ENCODE measurements at regions of chr2 and their contacts with region 1.

Region 1: DNA sequence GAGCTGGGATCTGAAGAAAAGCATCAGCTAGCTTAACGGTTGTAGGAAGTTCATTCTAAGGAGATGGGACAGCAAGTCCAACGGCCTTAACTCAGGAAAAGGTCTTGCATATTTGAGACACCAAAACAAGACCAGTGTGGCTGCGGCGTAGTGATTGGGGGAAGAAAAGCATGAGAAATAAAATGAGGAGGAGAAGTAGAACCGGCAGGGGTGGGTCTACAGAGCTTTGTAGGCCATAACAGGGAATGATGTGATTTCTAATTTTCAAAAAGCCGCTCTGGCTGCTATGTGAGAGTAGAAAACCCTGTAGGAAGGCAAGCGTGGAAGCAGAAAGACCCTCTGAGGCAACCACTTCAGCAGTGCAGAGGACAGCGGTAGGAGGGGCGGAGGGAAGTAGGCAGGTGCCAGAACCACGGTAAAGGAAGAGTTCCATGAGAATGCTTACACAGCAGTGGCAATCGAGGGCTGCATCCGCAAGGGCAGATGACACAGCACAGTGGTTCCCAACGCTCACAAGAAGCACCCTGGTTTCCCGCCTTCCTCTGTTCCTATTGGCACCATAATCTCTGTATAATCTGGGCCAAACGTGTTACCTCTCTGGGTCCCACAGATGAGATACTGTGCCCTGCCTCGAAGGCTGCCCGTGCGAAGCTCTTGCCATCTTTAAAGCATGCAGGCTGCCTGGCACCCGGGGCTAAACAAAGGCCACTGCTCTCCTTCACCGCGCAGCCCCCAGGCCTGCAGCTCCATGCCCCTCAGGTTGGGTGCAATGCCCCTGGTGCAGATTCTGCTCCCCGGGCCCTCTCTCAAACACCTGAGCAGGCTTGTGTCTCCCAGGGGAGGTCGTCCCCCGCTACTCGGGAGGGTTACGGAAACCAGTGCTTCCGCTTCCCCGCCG is 791 bp downstream of the ANKRD39 start:
- DNase-seq: no peak
- H3K4me3 ChIP-seq: peak overlapping the region; percentile 81
- H3K27me3 ChIP-seq: no peaks in the 10 kb centered on the region
- CTCF ChIP-seq: no peak

Region 2: GRCh38 chr2:96531872-96532704 is 324.9 kb before region 1 on chr2:
- CTCF ChIA-PET with region 1: no interaction called
- POLR2A ChIA-PET with region 1: no interaction called
- DNase-seq: peak; percentile 99
- H3K4me3 ChIP-seq: 0 out of 2 replicates have a peak overlapping the region, but pooled peaks have one; percentile 10
- H3K27me3 ChIP-seq: no peaks in the 10 kb centered on the region
- CTCF ChIP-seq: no peak

Region 3: GRCh38 chr2:96832754-96833507 is 24.1 kb before region 1 on chr2:
- CTCF ChIA-PET with region 1: interaction called, 12 read pairs
- POLR2A ChIA-PET with region 1: no interaction called
- DNase-seq: no peak
- H3K4me3 ChIP-seq: no peak overlapping the region
- H3K27me3 ChIP-seq: no peaks in the 10 kb centered on the region
- CTCF ChIP-seq: no peak

Region 4: DNA sequence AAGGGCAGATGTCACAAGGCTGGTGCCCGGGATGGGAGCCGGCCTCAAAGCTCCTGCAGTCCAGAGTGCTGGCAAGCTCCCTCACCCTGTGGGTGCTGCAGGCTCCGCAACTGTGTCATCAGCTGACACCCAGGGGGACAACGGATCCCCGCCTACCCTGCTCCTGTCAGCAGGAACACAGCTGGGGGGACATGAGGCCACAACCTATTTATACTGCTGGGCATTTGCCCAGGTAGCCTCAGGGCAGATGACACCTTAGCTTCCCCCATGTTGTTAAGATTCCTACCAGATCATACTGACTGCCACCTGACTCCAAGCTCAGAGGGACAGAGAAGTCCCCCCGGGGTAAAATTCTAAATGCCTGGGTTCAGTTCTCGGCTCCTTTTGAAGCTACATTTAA is 14.4 kb before region 1 on chr2:
- CTCF ChIA-PET with region 1: interaction called, 15 read pairs
- POLR2A ChIA-PET with region 1: interaction called, 3 read pairs
- DNase-seq: no peak
- H3K4me3 ChIP-seq: no peak overlapping the region
- H3K27me3 ChIP-seq: no peaks in the 10 kb centered on the region
- CTCF ChIP-seq: no peak

Region 5: GRCh38 chr2:96868555-96869280 is 11.7 kb after region 1 on chr2:
- CTCF ChIA-PET with region 1: interaction called, 34 read pairs
- POLR2A ChIA-PET with region 1: interaction called, 5 read pairs
- DNase-seq: peak; percentile 37
- H3K4me3 ChIP-seq: peak overlapping the region; percentile 95
- H3K27me3 ChIP-seq: no peaks in the 10 kb centered on the region; the same call in 1 of the 2 replicates
- CTCF ChIP-seq: peak; percentile 47

Region 6: GRCh38 chr2:96907115-96908041 is 50.4 kb after region 1 on chr2:
- CTCF ChIA-PET with region 1: interaction called, 12 read pairs
- POLR2A ChIA-PET with region 1: no interaction called
- DNase-seq: no peak
- H3K4me3 ChIP-seq: no peak overlapping the region
- H3K27me3 ChIP-seq: no peaks in the 10 kb centered on the region; the same call in 1 of the 2 replicates
- CTCF ChIP-seq: no peak

Region 7: GRCh38 chr2:96927405-96928243 is 70.6 kb after region 1 on chr2:
- CTCF ChIA-PET with region 1: interaction called, 14 read pairs
- POLR2A ChIA-PET with region 1: no interaction called
- DNase-seq: no peak
- H3K4me3 ChIP-seq: peak overlapping the region; percentile 5; the same call in 1 of the 2 replicates
- H3K27me3 ChIP-seq: peaks cover 21% of the 10 kb centered on the region
- CTCF ChIP-seq: peak; percentile 32; the same call in 1 of the 2 replicates

Region 8: GRCh38 chr2:96951093-96951654 is 94.1 kb after region 1 on chr2:
- CTCF ChIA-PET with region 1: interaction called, 94 read pairs
- POLR2A ChIA-PET with region 1: no interaction called
- DNase-seq: no peak
- H3K4me3 ChIP-seq: no peak overlapping the region
- H3K27me3 ChIP-seq: peaks cover 11% of the 10 kb centered on the region
- CTCF ChIP-seq: peak; percentile 95

Measured in BJ (cell line).